ENCODE measurements at regions of chr19 and their contacts with region 1.

Region 1: DNA sequence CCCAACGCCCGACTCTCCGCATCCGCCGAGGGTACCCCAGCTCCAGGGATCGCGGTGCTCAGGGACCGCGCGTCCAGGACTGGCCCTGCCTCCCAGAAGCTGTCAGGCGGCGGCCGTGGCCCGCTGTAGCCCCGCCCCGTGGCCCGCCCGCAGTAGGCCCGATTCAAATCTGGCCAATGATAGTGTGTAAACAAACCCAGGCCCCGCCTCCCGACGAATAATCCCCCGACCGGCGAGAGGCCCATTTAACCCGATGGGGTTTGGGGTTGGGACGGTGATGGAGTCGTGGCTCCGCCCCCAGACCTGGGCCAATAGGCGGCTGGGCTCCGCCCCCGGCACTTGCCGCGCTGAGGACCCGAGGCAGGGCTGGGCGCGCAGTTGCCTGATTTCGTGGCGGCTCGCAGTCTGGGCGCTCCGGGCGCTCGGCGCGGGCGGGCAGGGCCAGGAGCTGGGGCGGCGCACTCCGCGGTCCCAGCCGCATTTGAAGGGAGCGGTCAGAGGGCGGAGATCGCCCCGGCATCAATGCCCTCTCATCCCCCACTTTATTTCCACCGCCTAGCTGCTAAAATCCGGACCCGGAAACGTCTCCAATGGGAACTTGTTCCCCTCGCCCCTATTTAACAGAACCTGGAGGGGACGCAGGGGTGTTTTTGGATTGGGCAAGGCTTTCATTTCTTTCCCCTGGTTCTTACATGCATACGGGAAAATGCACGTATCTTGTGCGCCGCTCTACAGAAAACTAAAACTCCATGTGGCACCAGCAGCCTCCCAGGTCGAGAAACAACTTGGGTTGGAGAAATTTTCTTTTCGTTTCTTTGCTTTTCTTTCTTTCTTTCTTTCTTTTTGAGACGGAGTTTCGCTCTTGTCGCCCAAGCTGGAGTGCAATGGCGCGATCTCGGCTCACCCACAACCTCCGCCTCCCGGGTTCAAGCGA is 8.4 kb upstream of the BICRA start:
- DNase-seq: peak; percentile 100
- H3K4me3 Mint-ChIP-seq: peak overlapping the region; percentile 85
- H3K27ac Mint-ChIP-seq: peak overlapping the region; percentile 88
- H3K4me1 Mint-ChIP-seq: peaks cover 17% of the 10 kb centered on the region
- H3K27me3 Mint-ChIP-seq: no peaks in the 10 kb centered on the region

Region 2: GRCh38 chr19:47514869-47515588 is 85.5 kb before region 1 on chr19 and contains the start of gene NAPA:
- CTCF ChIA-PET with region 1: interaction called, 4 read pairs
- intact Hi-C with region 1: loop called (anchors 1 kb)
- DNase-seq: peak; percentile 100
- H3K4me3 Mint-ChIP-seq: peak within 1 kb of the TSS; percentile 98
- H3K27ac Mint-ChIP-seq: peak within 1 kb of the TSS; percentile 97
- H3K4me1 Mint-ChIP-seq: peaks cover 81% of the 10 kb centered on the region
- H3K27me3 Mint-ChIP-seq: no peaks in the 10 kb centered on the region
- total RNA-seq, gene NAPA: 72.5 to 75.1 TPM

Region 3: GRCh38 chr19:47778089-47778953 is 177.8 kb after region 1 on chr19 and contains the start of gene SELENOW:
- CTCF ChIA-PET with region 1: no interaction called
- intact Hi-C with region 1: loop called (anchors 10 kb)
- DNase-seq: peak; percentile 81
- H3K4me3 Mint-ChIP-seq: peak within 1 kb of the TSS; percentile 92
- H3K27ac Mint-ChIP-seq: peak within 1 kb of the TSS; percentile 92
- H3K4me1 Mint-ChIP-seq: peaks cover 23% of the 10 kb centered on the region
- H3K27me3 Mint-ChIP-seq: no peaks in the 10 kb centered on the region
- total RNA-seq, gene SELENOW: 146 to 149 TPM

Measured in activated naive CD4-positive, alpha-beta T cell treated with anti-CD3 and anti-CD28 coated beads for 36 hours (primary cell).